ENCODE measurements at regions of chr10 and their contacts with region 1.

Region 1: DNA sequence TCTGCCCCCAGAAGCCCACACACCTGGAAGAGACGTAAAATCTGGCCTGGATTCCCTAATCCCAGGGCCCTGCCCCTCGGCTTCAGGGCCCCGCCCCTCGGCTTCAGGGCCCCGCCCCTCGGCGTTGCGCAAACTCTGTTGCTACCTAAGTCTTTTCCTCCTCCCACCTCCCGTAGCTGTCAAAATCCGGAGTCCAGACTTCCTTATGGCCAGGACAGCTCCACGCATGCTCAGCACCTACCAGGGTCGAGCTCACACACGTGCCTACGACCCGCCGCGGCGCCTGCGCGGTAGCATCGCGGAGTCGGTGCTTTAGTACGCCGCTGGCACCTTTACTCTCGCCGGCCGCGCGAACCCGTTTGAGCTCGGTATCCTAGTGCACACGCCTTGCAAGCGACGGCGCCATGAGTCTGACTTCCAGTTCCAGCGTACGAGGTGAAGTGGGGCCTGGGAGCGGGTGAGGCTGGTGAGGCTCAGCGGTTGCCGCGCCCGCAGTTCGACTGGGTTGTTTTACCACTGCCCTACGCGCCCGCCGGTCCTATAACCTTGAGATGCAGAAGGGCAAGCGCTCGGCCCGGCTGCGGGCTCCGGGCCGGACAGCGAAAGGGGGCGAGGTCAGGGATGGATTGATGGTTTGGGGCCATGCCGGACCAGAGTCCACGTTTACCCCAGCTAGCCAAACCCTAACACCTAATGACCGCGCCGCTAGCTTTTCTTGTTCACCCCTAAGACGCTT is at the start of gene CISD1:
- DNase-seq: peak; percentile 99
- H3K4me3 Mint-ChIP-seq: peak within 1 kb of the TSS; percentile 98
- H3K27ac Mint-ChIP-seq: peak within 1 kb of the TSS; percentile 96
- H3K4me1 Mint-ChIP-seq: peaks cover 8% of the 10 kb centered on the region
- H3K27me3 Mint-ChIP-seq: no peaks in the 10 kb centered on the region
- CTCF ChIP-seq: no peak
- total RNA-seq, gene CISD1: 51.8 and 58.0 TPM in 2 replicates

Region 2: GRCh38 chr10:57952741-57953140 is 316.3 kb before region 1 on chr10:
- CTCF ChIA-PET with region 1: no interaction called
- POLR2A ChIA-PET with region 1: no interaction called
- intact Hi-C with region 1: no loop called
- DNase-seq: peak; percentile 21
- H3K4me3 Mint-ChIP-seq: no peak overlapping the region
- H3K27ac Mint-ChIP-seq: no peak overlapping the region
- H3K4me1 Mint-ChIP-seq: peaks cover 20% of the 10 kb centered on the region
- H3K27me3 Mint-ChIP-seq: no peaks in the 10 kb centered on the region
- CTCF ChIP-seq: no peak

Region 3: DNA sequence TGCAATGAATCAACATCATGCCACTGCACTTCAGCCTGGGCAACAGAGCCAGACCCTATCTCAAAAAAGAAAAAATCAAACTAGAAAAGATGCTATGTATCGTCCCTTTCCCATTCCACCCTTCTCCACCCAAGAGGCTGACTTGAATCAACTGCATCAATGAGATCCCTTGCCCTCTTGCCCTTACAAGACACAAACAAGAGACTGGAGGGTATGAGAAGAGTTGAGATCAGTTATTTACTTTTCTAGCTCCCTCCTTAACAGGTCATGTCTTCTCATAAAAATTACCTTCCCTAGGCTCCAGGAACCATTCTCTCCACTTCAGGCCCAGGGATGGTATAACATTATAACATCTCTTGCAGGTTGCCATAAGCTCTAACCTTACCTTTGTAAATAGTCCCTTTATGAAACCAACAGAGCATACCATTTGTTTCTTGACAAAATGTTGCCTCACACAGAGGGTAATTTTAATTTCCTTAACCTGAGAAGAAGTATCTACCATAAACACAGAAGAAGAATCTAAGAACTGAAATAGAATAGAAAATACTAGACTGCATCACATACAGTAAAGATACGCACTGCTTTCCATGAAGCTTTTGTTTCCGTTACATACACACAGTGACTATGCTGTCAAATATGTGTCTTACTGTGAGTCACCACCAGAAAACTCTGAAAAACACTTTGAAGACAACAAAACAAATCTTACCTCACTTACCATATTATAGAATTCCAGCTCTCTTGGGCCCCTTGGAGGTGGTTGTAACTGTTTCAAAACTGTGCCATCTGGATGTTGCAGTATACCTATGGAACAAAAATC is 31.8 kb before region 1 on chr10:
- CTCF ChIA-PET with region 1: no interaction called
- POLR2A ChIA-PET with region 1: interaction called, 17 read pairs
- intact Hi-C with region 1: no loop called
- DNase-seq: peak; percentile 78
- H3K4me3 Mint-ChIP-seq: peak overlapping the region; percentile 22
- H3K27ac Mint-ChIP-seq: peak overlapping the region; percentile 82
- H3K4me1 Mint-ChIP-seq: peaks cover 30% of the 10 kb centered on the region
- H3K27me3 Mint-ChIP-seq: no peaks in the 10 kb centered on the region
- CTCF ChIP-seq: no peak

Region 4: GRCh38 chr10:58280982-58281752 is 12.1 kb after region 1 on chr10:
- CTCF ChIA-PET with region 1: interaction called, 3 read pairs
- POLR2A ChIA-PET with region 1: interaction called, 22 read pairs
- intact Hi-C with region 1: no loop called
- DNase-seq: no peak
- H3K4me3 Mint-ChIP-seq: no peak overlapping the region
- H3K27ac Mint-ChIP-seq: peak overlapping the region; percentile 47
- H3K4me1 Mint-ChIP-seq: peaks cover 17% of the 10 kb centered on the region
- H3K27me3 Mint-ChIP-seq: no peaks in the 10 kb centered on the region
- CTCF ChIP-seq: no peak

Region 5: DNA sequence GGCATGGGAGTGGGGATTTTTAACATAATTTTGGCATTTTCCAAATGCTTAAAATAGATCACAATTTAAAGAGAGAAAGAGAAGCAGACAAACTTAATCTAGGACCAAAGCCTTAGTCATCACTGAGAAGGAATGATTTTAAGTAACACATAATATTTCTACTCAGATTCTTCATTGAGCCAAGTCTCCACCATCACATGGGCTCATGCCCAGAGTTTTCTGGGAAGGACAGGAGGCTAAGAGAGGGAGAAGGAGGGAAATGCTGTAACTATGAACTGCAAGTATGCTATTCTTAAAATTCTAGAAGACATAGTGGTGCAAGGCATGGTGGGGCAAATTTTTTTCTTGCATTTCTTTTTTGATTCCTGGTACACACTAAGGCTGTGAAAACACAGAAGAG is 42.0 kb after region 1 on chr10:
- CTCF ChIA-PET with region 1: no interaction called
- POLR2A ChIA-PET with region 1: no interaction called
- intact Hi-C with region 1: no loop called
- DNase-seq: no peak
- H3K4me3 Mint-ChIP-seq: no peak overlapping the region
- H3K27ac Mint-ChIP-seq: no peak overlapping the region
- H3K4me1 Mint-ChIP-seq: no peaks in the 10 kb centered on the region
- H3K27me3 Mint-ChIP-seq: peaks cover 40% of the 10 kb centered on the region
- CTCF ChIP-seq: no peak

Region 6: DNA sequence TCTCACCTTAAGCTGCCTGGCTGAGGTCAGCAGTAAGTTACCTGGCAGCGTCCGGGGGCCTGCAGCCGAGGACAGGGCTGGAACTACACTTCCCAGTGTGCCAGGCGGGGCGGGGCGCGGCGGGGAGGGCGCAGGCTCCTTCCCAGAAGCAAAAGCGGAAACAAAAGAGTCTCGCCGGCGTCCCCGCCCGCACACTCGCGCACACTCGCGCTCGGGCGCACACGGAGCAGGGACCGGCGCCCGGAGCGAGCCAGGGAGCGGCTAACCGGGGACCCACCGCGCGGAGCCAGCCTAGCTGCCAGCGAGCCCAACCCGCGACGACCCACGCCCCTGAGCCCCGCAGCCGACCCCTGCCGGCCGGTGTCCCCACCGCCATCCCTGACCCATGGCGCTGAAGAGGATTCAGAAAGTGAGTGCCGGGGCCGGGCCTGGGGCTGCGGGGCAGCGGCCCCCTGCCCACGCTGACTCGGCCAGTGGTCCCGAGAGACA is 65.8 kb after region 1 on chr10 and contains the start of gene UBE2D1:
- CTCF ChIA-PET with region 1: interaction called, 3 read pairs
- POLR2A ChIA-PET with region 1: interaction called, 19 read pairs
- intact Hi-C with region 1: no loop called
- DNase-seq: peak; percentile 77
- H3K4me3 Mint-ChIP-seq: peak within 1 kb of the TSS; percentile 95
- H3K27ac Mint-ChIP-seq: peak within 1 kb of the TSS; percentile 86
- H3K4me1 Mint-ChIP-seq: peaks cover 13% of the 10 kb centered on the region
- H3K27me3 Mint-ChIP-seq: no peaks in the 10 kb centered on the region
- CTCF ChIP-seq: peak; percentile 7
- total RNA-seq, gene UBE2D1: 12.2 and 14.7 TPM in 2 replicates

Region 7: DNA sequence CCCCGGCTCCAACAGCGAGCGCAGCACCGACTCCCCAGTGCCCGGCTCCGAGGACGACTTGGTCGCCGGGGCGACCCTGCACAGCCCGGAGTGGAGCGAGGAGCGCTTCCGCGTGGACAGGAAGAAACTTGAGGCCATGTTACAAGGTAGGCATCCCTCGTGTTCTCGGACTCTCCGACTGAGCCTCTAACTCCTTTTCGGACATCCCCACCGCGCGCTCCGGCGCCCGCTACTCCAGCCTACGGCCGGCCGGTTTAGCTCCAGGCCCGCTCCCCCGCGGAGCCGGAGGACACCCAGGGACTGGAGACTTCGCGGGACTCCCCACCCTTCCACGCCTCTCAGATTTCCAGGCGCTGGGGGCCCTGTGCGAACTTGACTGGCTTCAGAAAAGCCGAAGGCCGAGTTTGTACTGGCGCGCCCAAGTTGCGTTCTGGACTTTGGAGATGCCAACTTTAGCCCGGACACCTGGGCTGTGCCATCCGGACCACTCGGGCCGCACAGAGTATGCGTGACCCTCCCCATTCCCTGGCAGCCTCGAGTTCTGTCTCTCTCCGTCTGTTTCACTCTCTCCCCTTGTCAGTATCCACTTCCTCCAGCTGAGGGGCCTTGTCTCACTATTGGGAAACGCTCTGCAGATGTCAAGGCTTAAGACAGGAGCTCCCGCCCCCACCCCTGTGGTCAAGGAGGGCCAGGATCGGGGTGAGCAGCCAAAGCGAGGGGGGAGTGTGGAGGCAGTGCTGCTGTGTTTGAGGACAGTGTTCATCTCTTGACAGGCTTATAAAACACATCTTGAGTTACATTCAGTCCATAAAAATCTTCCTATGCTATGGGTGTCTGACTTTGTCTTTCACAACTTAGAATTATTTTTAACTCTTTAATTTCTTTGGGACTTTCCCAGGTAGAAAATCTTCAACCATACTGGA is 244.4 kb after region 1 on chr10:
- CTCF ChIA-PET with region 1: interaction called, 3 read pairs
- POLR2A ChIA-PET with region 1: interaction called, 13 read pairs
- intact Hi-C with region 1: no loop called
- DNase-seq: peak; percentile 73
- H3K4me3 Mint-ChIP-seq: peak overlapping the region; percentile 74
- H3K27ac Mint-ChIP-seq: peak overlapping the region; percentile 89
- H3K4me1 Mint-ChIP-seq: peaks cover 27% of the 10 kb centered on the region
- H3K27me3 Mint-ChIP-seq: no peaks in the 10 kb centered on the region
- CTCF ChIP-seq: no peak

Region 8: DNA sequence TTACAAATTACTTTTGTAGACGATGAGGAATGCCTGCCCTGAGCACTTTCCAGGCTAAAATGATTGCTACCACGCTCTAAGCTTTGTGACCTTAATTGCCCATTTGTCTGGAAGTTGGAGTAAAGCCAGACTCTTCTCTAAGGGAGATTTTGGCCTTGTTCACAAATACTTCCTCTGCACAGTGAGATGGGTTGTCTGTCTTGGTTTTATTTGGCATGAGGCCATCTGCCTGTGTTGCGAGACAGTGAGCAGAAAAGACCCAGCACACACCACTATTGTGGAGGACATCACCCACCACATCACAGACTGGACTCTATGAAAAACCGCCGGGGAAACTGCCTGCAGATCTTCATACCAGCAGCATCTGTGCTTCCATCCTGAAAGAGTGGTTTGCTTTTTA is 382.0 kb after region 1 on chr10:
- CTCF ChIA-PET with region 1: no interaction called
- POLR2A ChIA-PET with region 1: no interaction called
- intact Hi-C with region 1: no loop called
- DNase-seq: peak; percentile 66
- H3K4me3 Mint-ChIP-seq: no peak overlapping the region
- H3K27ac Mint-ChIP-seq: peak overlapping the region; percentile 16
- H3K4me1 Mint-ChIP-seq: peaks cover 33% of the 10 kb centered on the region
- H3K27me3 Mint-ChIP-seq: no peaks in the 10 kb centered on the region
- CTCF ChIP-seq: no peak

Measured in MCF 10A (cell line).